Aorta (tissue), 5 donors: ENCODE measurements at regions of chr5 and their contacts with region 1.

Region 1: DNA sequence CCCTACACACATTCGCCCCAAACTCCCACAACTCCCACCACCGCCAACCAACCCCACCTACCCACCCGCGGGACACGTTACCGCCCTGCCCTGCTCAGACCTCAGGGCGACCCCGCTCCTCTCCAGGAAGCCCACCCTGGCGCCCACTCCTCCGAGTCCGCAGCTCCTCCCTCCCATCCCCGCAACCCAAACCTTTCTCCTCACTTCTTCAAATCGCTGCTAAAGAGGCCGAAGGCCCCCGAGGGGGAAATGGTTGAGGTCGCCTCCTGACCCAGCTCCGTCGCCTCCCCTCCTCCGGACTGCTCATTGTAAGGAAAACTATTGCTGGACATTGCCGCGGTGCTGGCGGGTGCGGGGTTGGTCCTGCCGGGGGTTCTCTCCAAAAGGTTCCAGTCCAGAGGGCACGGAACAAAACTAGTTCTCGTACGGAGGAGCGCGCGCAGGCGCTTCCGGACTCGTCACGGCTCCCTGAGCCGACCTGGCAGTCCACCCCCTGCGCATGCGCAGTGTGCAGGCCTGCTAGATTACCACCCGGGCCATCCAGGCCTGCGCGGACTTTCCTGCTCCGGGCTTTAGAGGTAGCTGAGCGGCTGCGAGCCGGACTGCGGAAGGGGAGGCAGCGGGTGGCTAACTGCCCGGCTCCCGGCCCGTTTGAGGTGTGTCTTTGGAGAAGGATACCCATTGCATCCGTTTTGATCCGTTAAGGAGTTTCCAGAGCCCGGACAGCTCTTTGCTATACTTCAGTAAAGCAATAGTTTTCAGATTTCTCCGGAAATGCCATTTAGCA is at the start of gene AP3B1:
- DNase-seq: peak; percentile 100
- ATAC-seq: peak; percentile 100
- H3K4me3 ChIP-seq: peak within 1 kb of the TSS; percentile 60 to 88
- H3K27ac ChIP-seq: peak within 1 kb of the TSS; percentile 24 to 68
- H3K4me1 ChIP-seq: no peaks in the 10 kb centered on the region
- H3K27me3 ChIP-seq: no peaks in the 10 kb centered on the region
- total RNA-seq, gene AP3B1: 45.5 to 46.7 TPM

Region 2: GRCh38 chr5:78345485-78345884 is 51.0 kb after region 1 on chr5:
- intact Hi-C with region 1: no loop called
- DNase-seq: no peak
- ATAC-seq: no peak
- H3K4me3 ChIP-seq: no peak overlapping the region
- H3K27ac ChIP-seq: no peak overlapping the region
- H3K4me1 ChIP-seq: no peaks in the 10 kb centered on the region
- H3K27me3 ChIP-seq: no peaks in the 10 kb centered on the region

Region 3: GRCh38 chr5:78359831-78360673 is 65.6 kb after region 1 on chr5 and contains the start of gene SCAMP1:
- intact Hi-C with region 1: loop called (anchors 1 to 2 kb)
- DNase-seq: peak; percentile 94 to 97
- ATAC-seq: peak; percentile 98
- H3K4me3 ChIP-seq: peak within 1 kb of the TSS; percentile 50 to 82
- H3K27ac ChIP-seq: peak within 1 kb of the TSS in 1 of 2 donors; percentile 73
- H3K4me1 ChIP-seq: no peaks in the 10 kb centered on the region
- H3K27me3 ChIP-seq: no peaks in the 10 kb centered on the region
- total RNA-seq, gene SCAMP1: 40.9 to 48.1 TPM

Region 4: DNA sequence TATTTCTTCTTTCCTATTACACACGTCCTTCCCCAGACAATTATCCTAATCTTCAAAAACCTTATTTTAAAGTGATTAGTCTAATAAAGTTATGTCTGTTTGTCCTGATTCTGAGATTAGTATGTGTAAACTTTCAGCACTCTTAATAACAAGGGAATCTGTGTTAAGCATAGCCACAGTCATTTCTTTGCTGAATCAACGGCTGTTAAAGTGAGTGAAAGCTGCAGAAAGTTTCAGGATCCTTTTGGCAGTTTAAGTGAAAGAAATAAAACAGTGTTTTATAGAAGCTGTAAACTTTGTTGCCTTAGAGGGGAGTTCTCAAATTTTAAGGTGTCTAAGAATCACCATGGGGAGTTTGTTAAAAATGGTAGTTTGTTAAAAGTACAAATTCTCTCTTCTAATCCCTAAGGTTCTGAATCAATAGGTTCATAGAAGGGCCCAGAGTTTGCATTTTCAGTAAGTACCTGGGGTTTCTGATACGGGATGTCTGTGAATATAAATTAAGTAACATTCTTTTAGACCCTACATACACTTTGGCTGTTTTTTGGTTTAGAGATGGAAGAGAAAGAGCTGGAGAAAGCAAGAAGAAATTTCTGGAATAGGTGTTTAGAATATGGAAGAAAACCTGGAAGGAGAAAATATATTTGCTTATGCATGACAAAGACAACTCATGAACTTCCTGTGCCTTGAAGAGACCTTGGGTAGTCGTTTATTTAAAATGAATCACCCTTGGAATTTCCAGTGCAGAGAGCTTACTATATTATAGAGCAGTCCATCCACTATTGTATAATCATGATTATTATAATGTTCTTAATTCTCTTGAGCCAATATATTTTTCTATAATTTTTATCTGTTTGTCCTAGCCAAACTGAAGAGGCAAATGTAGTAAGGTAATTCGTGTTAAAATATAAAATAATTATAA is 111.6 kb after region 1 on chr5:
- intact Hi-C with region 1: no loop called
- DNase-seq: no peak
- ATAC-seq: no peak
- H3K4me3 ChIP-seq: no peak overlapping the region
- H3K27ac ChIP-seq: no peak overlapping the region
- H3K4me1 ChIP-seq: peaks cover 0 to 2% of the 10 kb centered on the region in 2 donors
- H3K27me3 ChIP-seq: no peaks in the 10 kb centered on the region